ENCODE measurements at regions of chr7 and their contacts with region 1.

Region 1: GRCh38 chr7:108525985-108526767 is at the start of gene PNPLA8:
- DNase-seq: peak; percentile 99
- H3K4me3 Mint-ChIP-seq: peak within 1 kb of the TSS; percentile 99
- H3K27ac Mint-ChIP-seq: peak within 1 kb of the TSS; percentile 99
- H3K4me1 Mint-ChIP-seq: peaks cover 42% of the 10 kb centered on the region
- H3K27me3 Mint-ChIP-seq: no peaks in the 10 kb centered on the region
- CTCF ChIP-seq: no peak
- total RNA-seq, gene PNPLA8: 28.5 and 39.9 TPM in 2 replicates

Region 2: GRCh38 chr7:108468246-108468645 is 57.9 kb before region 1 on chr7:
- CTCF ChIA-PET with region 1: no interaction called
- POLR2A ChIA-PET with region 1: no interaction called
- intact Hi-C with region 1: no loop called
- DNase-seq: no peak
- H3K4me3 Mint-ChIP-seq: no peak overlapping the region
- H3K27ac Mint-ChIP-seq: no peak overlapping the region
- H3K4me1 Mint-ChIP-seq: no peaks in the 10 kb centered on the region
- H3K27me3 Mint-ChIP-seq: no peaks in the 10 kb centered on the region
- CTCF ChIP-seq: no peak

Region 3: GRCh38 chr7:108497082-108497725 is 29.0 kb before region 1 on chr7:
- CTCF ChIA-PET with region 1: interaction called, 5 read pairs
- POLR2A ChIA-PET with region 1: interaction called, 13 read pairs
- intact Hi-C with region 1: no loop called
- DNase-seq: peak; percentile 66
- H3K4me3 Mint-ChIP-seq: no peak overlapping the region
- H3K27ac Mint-ChIP-seq: no peak overlapping the region
- H3K4me1 Mint-ChIP-seq: peaks cover 5% of the 10 kb centered on the region
- H3K27me3 Mint-ChIP-seq: no peaks in the 10 kb centered on the region
- CTCF ChIP-seq: peak; percentile 77

Region 4: DNA sequence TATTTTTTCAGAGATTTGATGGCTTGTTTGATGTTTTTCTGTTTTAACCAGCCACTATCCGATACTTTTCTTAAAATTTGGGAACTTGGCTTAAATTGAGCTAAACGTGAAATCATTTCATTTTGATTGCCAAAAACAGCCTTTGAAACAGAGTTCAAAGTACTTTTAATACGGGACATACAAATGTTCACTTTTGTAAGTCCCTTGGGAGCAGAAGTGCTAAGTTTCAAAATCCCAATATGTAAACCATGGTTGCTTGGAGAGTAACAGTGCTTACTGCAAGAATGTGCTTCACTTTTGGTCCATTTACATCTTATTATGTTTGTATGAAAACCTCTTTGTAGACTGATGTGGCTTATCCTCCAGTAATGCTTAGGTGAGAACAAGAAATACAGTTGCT is 11.2 kb before region 1 on chr7:
- CTCF ChIA-PET with region 1: no interaction called
- POLR2A ChIA-PET with region 1: interaction called, 11 read pairs
- intact Hi-C with region 1: no loop called
- DNase-seq: no peak
- H3K4me3 Mint-ChIP-seq: no peak overlapping the region
- H3K27ac Mint-ChIP-seq: no peak overlapping the region
- H3K4me1 Mint-ChIP-seq: peaks cover 12% of the 10 kb centered on the region
- H3K27me3 Mint-ChIP-seq: no peaks in the 10 kb centered on the region
- CTCF ChIP-seq: no peak

Region 5: GRCh38 chr7:108557191-108557590 is 31.0 kb after region 1 on chr7:
- CTCF ChIA-PET with region 1: interaction called, 5 read pairs
- POLR2A ChIA-PET with region 1: interaction called, 10 read pairs
- intact Hi-C with region 1: no loop called
- DNase-seq: no peak
- H3K4me3 Mint-ChIP-seq: no peak overlapping the region
- H3K27ac Mint-ChIP-seq: no peak overlapping the region
- H3K4me1 Mint-ChIP-seq: no peaks in the 10 kb centered on the region
- H3K27me3 Mint-ChIP-seq: no peaks in the 10 kb centered on the region
- CTCF ChIP-seq: no peak

Region 6: GRCh38 chr7:108569381-108570145 is 43.4 kb after region 1 on chr7 and contains the starts of genes DNAJB9 and THAP5:
- CTCF ChIA-PET with region 1: interaction called, 3 read pairs
- POLR2A ChIA-PET with region 1: interaction called, 244 read pairs
- intact Hi-C with region 1: loop called (anchors 1 kb)
- DNase-seq: peak; percentile 99
- H3K4me3 Mint-ChIP-seq: peak within 1 kb of the TSS; percentile 97
- H3K27ac Mint-ChIP-seq: peak within 1 kb of the TSS; percentile 99
- H3K4me1 Mint-ChIP-seq: peaks cover 28% of the 10 kb centered on the region
- H3K27me3 Mint-ChIP-seq: no peaks in the 10 kb centered on the region
- CTCF ChIP-seq: no peak
- total RNA-seq, gene DNAJB9: 43.4 and 45.9 TPM in 2 replicates
- total RNA-seq, gene THAP5: 44.0 and 49.1 TPM in 2 replicates

Region 7: DNA sequence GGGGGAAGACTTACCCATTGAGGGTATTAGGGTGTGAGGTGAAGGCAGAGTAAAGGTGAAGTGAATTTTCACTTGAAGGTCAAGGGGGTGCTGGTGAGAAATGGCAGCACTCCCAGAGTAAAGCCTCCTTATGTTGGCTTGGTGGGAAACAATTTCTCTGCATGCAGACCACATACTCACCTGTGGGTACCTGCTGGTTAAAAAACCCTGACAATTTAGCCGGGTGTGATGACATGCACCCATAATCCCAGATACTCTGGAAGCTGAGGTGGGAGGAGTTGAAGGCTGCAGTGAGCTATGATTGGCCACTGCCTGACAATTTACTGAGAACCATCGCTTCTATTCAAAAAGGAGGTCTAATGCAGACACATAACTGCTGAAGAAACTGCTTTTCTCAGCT is 49.0 kb after region 1 on chr7:
- CTCF ChIA-PET with region 1: interaction called, 3 read pairs
- POLR2A ChIA-PET with region 1: interaction called, 244 read pairs
- intact Hi-C with region 1: no loop called
- DNase-seq: no peak
- H3K4me3 Mint-ChIP-seq: no peak overlapping the region
- H3K27ac Mint-ChIP-seq: no peak overlapping the region
- H3K4me1 Mint-ChIP-seq: peaks cover 21% of the 10 kb centered on the region
- H3K27me3 Mint-ChIP-seq: no peaks in the 10 kb centered on the region
- CTCF ChIP-seq: no peak

Measured in MCF 10A (cell line).